Endothelial cell of umbilical vein (primary cell): ENCODE measurements at regions of chr7 and their contacts with region 1.

Region 1: DNA sequence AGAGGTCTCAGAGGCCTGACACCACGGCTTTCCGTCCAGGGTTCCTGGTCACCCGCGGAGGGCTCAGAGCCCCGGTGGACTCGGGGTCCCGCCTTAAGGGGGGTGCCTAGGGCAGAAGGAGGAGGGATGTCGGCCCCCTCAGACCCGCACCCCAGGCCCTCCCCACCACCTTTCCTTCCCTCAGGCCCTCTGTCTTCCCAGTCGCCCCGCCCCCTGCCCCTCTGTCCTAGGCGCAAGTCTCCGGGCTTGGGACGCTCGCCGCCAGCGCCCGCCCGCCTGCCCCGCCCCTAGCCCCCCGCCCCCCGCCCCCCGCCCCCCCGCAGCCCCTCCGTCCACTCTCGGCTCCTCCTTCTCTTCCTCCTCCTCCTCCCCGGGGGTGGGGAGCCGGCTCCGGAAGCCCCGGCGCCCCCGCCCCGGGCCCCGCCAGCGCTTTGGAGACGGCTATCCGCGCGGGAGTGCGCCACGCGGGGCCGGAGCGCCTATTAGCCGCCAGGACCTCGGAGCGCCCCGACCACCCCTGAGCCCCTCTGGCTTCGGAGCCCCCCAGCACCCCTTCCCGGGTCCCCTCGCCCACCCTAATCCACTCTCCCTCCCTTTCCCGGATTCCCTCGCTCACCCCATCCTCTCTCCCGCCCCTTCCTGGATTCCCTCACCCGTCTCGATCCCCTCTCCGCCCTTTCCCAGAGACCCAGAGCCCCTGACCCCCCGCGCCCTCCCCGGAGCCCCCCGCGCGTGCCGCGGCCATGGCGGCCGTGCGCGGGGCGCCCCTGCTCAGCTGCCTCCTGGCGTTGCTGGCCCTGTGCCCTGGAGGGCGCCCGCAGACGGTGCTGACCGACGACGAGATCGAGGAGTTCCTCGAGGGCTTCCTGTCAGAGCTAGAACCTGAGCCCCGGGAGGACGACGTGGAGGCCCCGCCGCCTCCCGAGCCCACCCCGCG is at the start of gene AEBP1:
- DNase-seq: peak; percentile 17
- H3K4me3 ChIP-seq: peak within 1 kb of the TSS; percentile 9 to 76 (median 59)
- H3K27ac ChIP-seq: no peak within 1 kb of the TSS
- H3K4me1 ChIP-seq: peaks cover 3% of the 10 kb centered on the region
- H3K27me3 ChIP-seq: no peaks in the 10 kb centered on the region
- CTCF ChIP-seq: no peak
- POLR2A ChIP-seq: no peak
- total RNA-seq, gene AEBP1: 47.7 and 48.0 TPM in 2 replicates

Region 2: GRCh38 chr7:43700059-43700501 is 404.1 kb before region 1 on chr7:
- CTCF ChIA-PET with region 1: no interaction called
- POLR2A ChIA-PET with region 1: no interaction called
- dilution Hi-C with region 1: no loop called
- intact Hi-C with region 1: no loop called
- DNase-seq: peak; percentile 69
- H3K4me3 ChIP-seq: no peak overlapping the region
- H3K27ac ChIP-seq: no peak overlapping the region
- H3K4me1 ChIP-seq: peaks cover 6% of the 10 kb centered on the region
- H3K27me3 ChIP-seq: no peaks in the 10 kb centered on the region
- CTCF ChIP-seq: peak; percentile 22 to 34
- POLR2A ChIP-seq: no peak

Region 3: GRCh38 chr7:43888993-43889945 is 214.9 kb before region 1 on chr7:
- CTCF ChIA-PET with region 1: no interaction called
- POLR2A ChIA-PET with region 1: no interaction called
- dilution Hi-C with region 1: no loop called
- intact Hi-C with region 1: no loop called
- DNase-seq: no peak
- H3K4me3 ChIP-seq: no peak overlapping the region
- H3K27ac ChIP-seq: no peak overlapping the region
- H3K4me1 ChIP-seq: peaks cover 6% of the 10 kb centered on the region
- H3K27me3 ChIP-seq: no peaks in the 10 kb centered on the region
- CTCF ChIP-seq: no peak
- POLR2A ChIP-seq: no peak

Region 4: DNA sequence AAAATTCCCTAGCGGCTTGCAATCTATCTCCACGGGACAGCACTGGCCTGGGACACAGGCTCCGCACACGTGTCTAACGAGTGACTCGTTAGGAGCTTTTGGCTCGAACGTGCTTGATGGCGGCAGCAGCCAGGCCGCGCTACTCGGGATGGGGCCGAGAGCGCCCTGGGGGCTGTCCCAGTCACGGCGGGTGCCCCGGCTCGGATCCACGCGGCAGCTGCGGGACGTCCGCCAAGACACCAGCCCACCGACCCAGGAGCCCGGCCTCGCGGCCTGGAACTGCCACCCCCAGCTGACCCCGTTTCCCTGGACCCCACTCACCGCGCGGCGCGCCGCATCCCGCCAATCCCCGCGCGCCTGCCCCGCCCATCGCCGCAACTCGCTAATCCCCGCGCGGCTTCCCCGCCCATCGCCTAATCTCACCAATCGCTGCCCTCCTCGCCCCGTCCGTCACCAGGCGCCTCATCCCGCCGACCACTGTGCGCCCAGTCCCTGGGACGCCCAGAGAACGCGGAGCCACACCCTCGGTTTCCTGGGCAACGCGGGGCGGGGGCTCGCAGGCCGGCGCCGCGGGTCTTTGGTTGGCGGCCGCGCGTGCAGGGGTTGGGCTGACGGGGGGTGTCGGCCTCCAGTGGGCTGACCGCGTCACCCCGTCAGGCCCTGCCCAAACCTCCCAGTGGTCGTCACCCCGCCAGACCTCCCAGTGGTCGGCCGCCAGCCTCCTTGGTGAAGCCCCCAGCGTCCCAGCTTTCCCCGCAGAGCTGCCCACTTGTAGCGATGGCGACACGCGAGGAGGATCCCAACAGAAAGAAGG is 19.2 kb after region 1 on chr7 and contains the start of gene POLD2:
- CTCF ChIA-PET with region 1: interaction called, 7 read pairs
- POLR2A ChIA-PET with region 1: no interaction called
- dilution Hi-C with region 1: no loop called
- intact Hi-C with region 1: loop called (anchors 2 kb)
- DNase-seq: peak; percentile 98
- H3K4me3 ChIP-seq: peak within 1 kb of the TSS; percentile 69 to 84 (median 79)
- H3K27ac ChIP-seq: peak within 1 kb of the TSS; percentile 53
- H3K4me1 ChIP-seq: peaks cover 14% of the 10 kb centered on the region
- H3K27me3 ChIP-seq: peaks cover 0 to under 1% of the 10 kb centered on the region in 2 experiments
- CTCF ChIP-seq: no peak
- POLR2A ChIP-seq: peak; percentile 40
- total RNA-seq, gene POLD2: 96.5 and 106 TPM in 2 replicates

Region 5: DNA sequence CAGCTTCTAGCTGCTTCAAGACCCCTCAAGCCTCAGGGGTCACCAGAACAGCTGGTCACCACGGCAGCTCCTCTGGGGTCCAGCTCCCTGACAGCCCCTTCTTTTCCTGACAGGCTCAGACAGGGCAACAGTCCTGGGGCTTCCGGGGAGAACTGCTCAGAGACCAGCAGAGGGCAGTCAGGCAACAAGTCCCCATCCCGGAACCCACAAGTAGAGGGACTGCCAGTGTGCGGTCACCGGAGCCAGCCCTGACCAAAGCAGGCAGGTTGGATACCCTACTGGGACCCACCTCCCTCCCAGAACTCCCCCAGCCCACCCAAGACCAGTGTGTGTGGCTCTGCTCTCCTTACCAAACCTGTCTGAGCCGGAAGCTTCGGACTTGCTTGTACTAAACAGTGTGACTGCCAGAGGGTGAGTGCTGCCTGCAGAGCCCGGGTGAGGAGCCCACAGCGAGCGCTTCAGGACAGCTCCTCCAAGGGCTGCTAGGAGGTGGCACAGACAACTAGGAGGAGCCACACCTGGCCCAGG is 136.9 kb after region 1 on chr7:
- CTCF ChIA-PET with region 1: no interaction called
- POLR2A ChIA-PET with region 1: no interaction called
- dilution Hi-C with region 1: no loop called
- intact Hi-C with region 1: no loop called
- DNase-seq: peak; percentile 63
- H3K4me3 ChIP-seq: no peak overlapping the region
- H3K27ac ChIP-seq: no peak overlapping the region
- H3K4me1 ChIP-seq: no peaks in the 10 kb centered on the region
- H3K27me3 ChIP-seq: no peaks in the 10 kb centered on the region
- CTCF ChIP-seq: peak; percentile 71 to 76
- POLR2A ChIP-seq: no peak